Common myeloid progenitor, CD34-positive (primary cell): ENCODE measurements at regions of chr1 and their contacts with region 1.

Region 1: GRCh38 chr1:46309401-46310159 is 6.1 kb downstream of the UQCRH start:
- DNase-seq: no peak
- H3K4me3 ChIP-seq: no peak overlapping the region
- H3K27ac ChIP-seq: no peak overlapping the region
- H3K4me1 ChIP-seq: peaks cover 6 to 38% (median 23%) of the 10 kb centered on the region in 4 experiments
- H3K27me3 ChIP-seq: no peaks in the 10 kb centered on the region

Region 2: DNA sequence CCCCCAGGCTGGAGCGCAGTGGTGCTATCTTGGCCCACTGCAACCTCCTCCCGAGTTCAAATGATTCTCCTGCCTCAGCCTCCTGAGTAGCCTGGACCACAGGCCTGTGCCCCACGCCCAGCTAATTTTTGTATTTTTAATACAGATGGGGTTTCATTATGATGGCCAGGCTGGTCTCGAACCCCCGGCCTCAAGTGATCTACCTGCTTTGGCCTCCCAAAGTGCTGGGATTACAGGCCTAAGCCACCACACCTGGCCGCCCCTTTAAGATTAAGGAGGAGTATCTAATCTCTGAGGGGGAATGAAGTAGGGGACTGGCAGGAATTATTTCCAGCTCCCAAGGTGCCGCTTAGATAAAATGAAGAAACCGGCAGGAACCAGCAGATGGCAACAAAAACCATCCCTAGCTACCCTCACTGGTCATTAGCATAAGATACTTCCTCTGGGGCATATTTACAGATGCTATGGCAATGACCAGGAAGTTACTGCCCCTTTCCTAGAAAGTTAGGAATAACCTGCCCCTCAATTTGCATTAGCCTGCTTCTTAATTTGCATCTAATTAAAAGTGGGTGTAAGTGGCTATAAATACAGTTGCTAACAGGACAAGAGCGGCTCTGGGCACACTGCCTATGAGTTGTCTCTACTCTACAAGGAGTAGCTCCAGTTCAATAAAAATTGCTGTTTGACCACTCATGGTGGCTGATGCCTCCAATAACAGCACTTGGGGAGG is 23.9 kb after region 1 on chr1:
- CTCF ChIA-PET with region 1: interaction called, 18 read pairs
- POLR2A ChIA-PET with region 1: no interaction called
- DNase-seq: peak; percentile 38 to 55 (median 54)
- H3K4me3 ChIP-seq: no peak overlapping the region
- H3K27ac ChIP-seq: no peak overlapping the region
- H3K4me1 ChIP-seq: peaks cover 0 to 3% (median 0%) of the 10 kb centered on the region in 4 experiments
- H3K27me3 ChIP-seq: no peaks in the 10 kb centered on the region

Region 3: GRCh38 chr1:46370214-46370633 is 60.6 kb after region 1 on chr1:
- CTCF ChIA-PET with region 1: no interaction called
- POLR2A ChIA-PET with region 1: no interaction called
- DNase-seq: peak; percentile 22 to 68 (median 43)
- H3K4me3 ChIP-seq: no peak overlapping the region
- H3K27ac ChIP-seq: peak overlapping the region in 1 of 2 experiments; percentile 32
- H3K4me1 ChIP-seq: peaks cover 0 to 18% (median 0%) of the 10 kb centered on the region in 4 experiments
- H3K27me3 ChIP-seq: no peaks in the 10 kb centered on the region